Testis (tissue), 5 donors: ENCODE measurements at regions of chr10 and their contacts with region 1.

Region 1: GRCh38 chr10:117537436-117537903 is 5.1 kb upstream of the EMX2 start:
- DNase-seq: no peak
- H3K4me3 ChIP-seq: peak overlapping the region; percentile 8 to 24
- H3K27ac ChIP-seq: peak overlapping the region in 1 of 2 donors; percentile 68
- H3K4me1 ChIP-seq: peaks cover 15% of the 10 kb centered on the region
- H3K27me3 ChIP-seq: peaks cover 4% of the 10 kb centered on the region
- CTCF ChIP-seq: peak; percentile 52 to 85 (median 64)
- POLR2A ChIP-seq: no peak

Region 2: GRCh38 chr10:117741524-117741923 is 204.1 kb after region 1 on chr10:
- intact Hi-C with region 1: no loop called
- DNase-seq: no peak
- H3K4me3 ChIP-seq: no peak overlapping the region
- H3K27ac ChIP-seq: no peak overlapping the region
- H3K4me1 ChIP-seq: no peaks in the 10 kb centered on the region
- H3K27me3 ChIP-seq: no peaks in the 10 kb centered on the region
- CTCF ChIP-seq: no peak
- POLR2A ChIP-seq: no peak

Region 3: DNA sequence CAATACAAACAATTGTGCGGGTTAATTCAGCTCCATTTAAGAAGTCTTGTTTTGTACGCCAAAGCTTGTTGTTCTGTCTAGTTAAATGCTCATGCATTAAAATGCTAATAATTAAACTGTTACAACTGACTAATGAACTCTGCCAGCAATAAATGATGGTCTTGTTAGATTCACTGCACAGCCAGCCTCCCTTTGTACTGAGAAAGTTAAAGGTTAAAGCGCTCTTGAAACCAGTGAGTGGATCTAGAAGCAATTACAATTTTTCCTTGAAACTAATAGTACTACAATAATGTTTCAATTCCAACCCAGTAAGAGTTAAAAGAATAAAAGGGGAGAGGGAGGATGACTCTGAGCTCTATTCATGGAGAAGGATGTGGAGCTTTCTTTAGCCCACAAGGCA is 238.1 kb after region 1 on chr10:
- intact Hi-C with region 1: no loop called
- DNase-seq: no peak
- H3K4me3 ChIP-seq: no peak overlapping the region
- H3K27ac ChIP-seq: no peak overlapping the region
- H3K4me1 ChIP-seq: no peaks in the 10 kb centered on the region
- H3K27me3 ChIP-seq: no peaks in the 10 kb centered on the region
- CTCF ChIP-seq: no peak
- POLR2A ChIP-seq: no peak

Region 4: DNA sequence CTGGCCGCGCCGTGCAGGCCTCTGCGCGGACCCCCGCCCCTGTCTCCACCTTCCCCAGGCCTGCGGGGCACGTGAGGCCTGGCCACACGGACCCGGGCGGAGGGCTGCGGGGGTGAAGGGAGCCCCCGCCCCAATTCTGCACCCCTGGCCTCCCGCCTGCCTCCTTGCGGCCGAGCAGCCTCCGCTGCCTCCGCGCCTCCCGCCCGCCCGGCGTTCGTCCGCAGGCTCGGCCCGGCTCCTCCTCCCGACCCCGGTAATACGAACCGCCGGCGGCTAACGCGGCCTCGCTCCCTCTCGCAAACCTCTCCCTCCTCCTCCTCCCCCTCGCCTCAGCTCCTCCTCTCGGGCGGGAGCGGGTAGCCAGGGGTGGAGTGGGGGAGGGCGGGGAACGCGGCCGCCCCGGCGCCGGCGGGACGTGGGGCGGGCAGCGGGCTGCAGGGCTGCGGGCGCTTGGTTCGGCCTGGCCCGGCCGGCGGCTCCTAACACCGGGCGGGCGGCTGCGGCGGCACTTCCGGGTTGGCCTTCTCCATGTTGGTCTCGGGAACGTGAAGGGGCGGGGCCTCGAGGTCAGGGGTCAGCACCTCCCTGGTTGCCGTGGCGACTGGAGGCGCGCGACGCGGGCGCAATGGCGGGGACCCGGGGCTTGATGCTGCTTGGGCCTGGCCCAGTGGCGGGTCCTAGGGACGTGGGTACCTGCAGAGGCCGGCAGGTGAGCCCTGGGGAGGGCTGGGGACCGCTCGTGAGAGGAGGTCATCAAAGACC is 509.1 kb after region 1 on chr10 and contains the start of gene RAB11FIP2:
- intact Hi-C with region 1: loop called (anchors 10 kb)
- DNase-seq: peak; percentile 98
- H3K4me3 ChIP-seq: peak within 1 kb of the TSS; percentile 89 to 97
- H3K27ac ChIP-seq: peak within 1 kb of the TSS; percentile 94 to 96
- H3K4me1 ChIP-seq: peaks cover 21% of the 10 kb centered on the region
- H3K27me3 ChIP-seq: no peaks in the 10 kb centered on the region
- CTCF ChIP-seq: no peak
- POLR2A ChIP-seq: peak; percentile 32
- total RNA-seq, gene RAB11FIP2: 41.6 to 52.8 TPM

Region 5: DNA sequence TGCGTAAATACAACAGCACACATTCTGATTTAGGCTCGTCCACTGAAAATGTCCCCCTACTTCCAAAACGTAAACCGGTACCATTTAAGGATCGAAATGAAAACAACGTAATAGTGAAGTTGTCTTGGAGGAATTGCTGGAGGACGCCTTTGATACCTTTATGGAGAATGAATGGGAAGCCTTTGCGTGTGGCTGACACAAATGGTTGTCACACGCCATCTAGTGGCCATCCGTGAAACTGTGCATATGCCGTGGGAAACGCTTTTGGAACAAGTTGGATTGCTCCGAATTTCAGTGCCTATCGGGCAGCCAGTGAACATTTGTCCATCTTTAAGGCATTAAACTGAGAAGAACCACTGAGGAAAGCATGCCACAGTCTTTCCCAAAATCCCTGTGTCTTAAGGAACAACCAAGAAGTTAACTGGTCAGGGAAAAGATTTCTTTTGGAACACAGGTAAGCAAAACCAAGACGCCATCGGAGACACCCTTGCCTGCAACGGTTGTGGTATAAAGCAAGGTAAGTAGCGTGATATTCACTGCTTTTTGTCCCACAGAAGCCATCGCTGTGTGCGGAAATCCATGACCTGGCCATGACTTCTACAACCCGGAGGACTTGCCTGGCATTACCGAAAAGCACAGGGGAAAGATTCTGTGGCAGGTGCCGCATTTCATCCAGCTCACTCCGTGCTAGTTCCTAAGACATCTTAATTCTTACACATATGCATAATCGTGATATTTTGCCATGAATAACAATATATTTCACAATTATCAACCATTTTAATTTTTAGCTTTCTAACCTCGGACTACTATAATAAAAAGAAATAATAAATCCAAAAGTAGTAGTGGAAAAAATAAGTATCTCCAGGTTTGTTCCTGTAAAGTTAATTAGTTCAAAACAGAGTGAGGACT is 704.0 kb after region 1 on chr10:
- intact Hi-C with region 1: loop called (anchors 10 kb)
- DNase-seq: peak; percentile 93
- H3K4me3 ChIP-seq: peak overlapping the region in 1 of 2 donors; percentile 2
- H3K27ac ChIP-seq: no peak overlapping the region
- H3K4me1 ChIP-seq: no peaks in the 10 kb centered on the region
- H3K27me3 ChIP-seq: no peaks in the 10 kb centered on the region
- CTCF ChIP-seq: peak; percentile 89 to 96 (median 92)
- POLR2A ChIP-seq: no peak